ENCODE measurements at regions of chr22 and their contacts with region 1.

Region 1: GRCh38 chr22:50244420-50245213 is at the start of gene TUBGCP6:
- DNase-seq: peak; percentile 95 to 96
- H3K4me3 ChIP-seq: peak within 1 kb of the TSS; percentile 77 to 100 (median 86)
- H3K27ac ChIP-seq: peak within 1 kb of the TSS; percentile 46 to 83 (median 68)
- H3K4me1 ChIP-seq: peaks cover 34 to 42% of the 10 kb centered on the region in 2 donors
- H3K27me3 ChIP-seq: no peaks in the 10 kb centered on the region
- CTCF ChIP-seq: peak in 4 of 6 experiments; percentile 7 to 27 (median 22)
- POLR2A ChIP-seq: peak in 1 of 2 donors; percentile 80
- total RNA-seq, gene TUBGCP6: 64.6 to 102 (median 80.3) TPM

Region 2: GRCh38 chr22:49112661-49113626 is 1131.7 kb before region 1 on chr22:
- intact Hi-C with region 1: no loop called
- DNase-seq: no peak
- H3K4me3 ChIP-seq: no peak overlapping the region
- H3K27ac ChIP-seq: no peak overlapping the region
- H3K4me1 ChIP-seq: no peaks in the 10 kb centered on the region
- H3K27me3 ChIP-seq: no peaks in the 10 kb centered on the region
- CTCF ChIP-seq: no peak
- POLR2A ChIP-seq: no peak

Region 3: DNA sequence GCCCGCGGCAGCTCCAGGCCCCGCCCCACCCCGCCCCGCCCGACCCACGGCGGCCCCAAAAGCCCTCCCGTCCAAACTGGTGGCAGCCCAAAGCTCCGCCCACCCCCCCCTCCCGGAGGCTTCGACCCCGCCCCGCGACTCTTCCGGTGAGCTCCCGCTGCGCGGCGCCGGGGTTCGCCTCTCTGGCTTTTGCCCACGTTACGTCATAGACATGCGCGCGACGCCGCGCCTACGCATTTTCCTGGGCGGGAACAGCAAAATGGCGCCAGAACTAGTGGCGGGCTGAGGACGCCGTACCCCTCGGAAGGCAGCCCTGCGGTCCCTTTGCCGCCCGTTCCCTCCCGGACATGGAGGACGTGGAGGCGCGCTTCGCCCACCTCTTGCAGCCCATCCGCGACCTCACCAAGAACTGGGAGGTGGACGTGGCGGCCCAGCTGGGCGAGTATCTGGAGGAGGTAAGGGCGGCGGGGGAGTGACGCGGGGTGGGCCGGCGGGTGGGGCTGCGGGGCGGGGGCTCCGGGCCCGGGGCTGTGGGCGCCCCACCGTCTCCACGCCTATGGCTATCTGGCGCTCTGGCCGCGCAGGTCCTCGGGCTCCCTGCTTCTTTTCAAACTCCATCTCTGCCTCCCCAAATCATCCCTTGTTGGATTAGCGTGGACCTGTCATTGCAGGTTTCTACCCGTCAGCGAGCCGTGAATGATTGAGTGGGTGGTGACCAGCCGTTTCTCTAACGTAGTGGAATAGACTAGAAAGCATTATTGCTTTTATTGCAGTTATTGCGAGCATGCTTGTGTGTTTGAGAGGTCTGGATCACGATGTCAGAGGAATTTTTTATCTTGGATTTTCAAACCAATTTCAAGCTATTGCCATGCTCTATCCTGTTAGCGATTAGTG is 263.6 kb after region 1 on chr22 and contains the start of gene NCAPH2:
- intact Hi-C with region 1: loop called (anchors 10 kb)
- DNase-seq: peak; percentile 93 to 95
- H3K4me3 ChIP-seq: peak within 1 kb of the TSS; percentile 87 to 98 (median 91)
- H3K27ac ChIP-seq: peak within 1 kb of the TSS; percentile 65 to 92 (median 89)
- H3K4me1 ChIP-seq: peaks cover 9 to 16% of the 10 kb centered on the region in 2 donors
- H3K27me3 ChIP-seq: no peaks in the 10 kb centered on the region
- CTCF ChIP-seq: peak in 1 of 6 experiments; percentile 30
- POLR2A ChIP-seq: peak in 1 of 2 donors; percentile 79
- total RNA-seq, gene NCAPH2: 39.6 to 47.5 (median 43.1) TPM

Measured in thyroid gland (tissue), 4 donors.